Motor neuron (in vitro differentiated cells): ENCODE measurements at regions of chrX and their contacts with region 1.

Region 1: DNA sequence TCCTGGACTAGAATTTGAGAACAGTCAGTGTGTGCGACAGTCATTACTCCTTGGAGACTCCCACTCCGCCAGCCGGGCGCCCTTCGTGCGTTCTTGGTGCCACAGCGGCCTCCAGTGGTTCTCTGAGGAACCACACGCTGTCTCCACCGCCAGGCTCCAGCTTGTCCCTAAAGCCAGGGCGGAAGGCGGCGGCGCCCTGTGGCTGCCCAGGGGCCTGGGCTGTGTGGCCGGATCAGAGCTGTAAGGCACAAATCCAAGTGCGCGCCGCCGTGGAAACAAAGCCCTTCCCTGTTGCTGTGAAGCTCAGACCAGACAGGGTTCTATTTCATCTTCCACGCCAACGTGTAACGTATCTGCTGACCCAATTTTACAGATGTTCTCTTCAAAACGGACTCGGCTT is 34.2 kb downstream of the IDS start:
- ATAC-seq: peak; percentile 91 to 99 (median 98)
- H3K4me3 ChIP-seq: no peak overlapping the region
- H3K27ac ChIP-seq: no peak overlapping the region
- H3K4me1 ChIP-seq: no peaks in the 10 kb centered on the region

Region 2: GRCh38 chrX:148069759-148070503 is 1401.0 kb before region 1 on chrX:
- in situ Hi-C with region 1: loop called in 2 of 9 experiments (anchors 25 kb)
- ATAC-seq: no peak
- H3K4me3 ChIP-seq: no peak overlapping the region
- H3K27ac ChIP-seq: no peak overlapping the region
- H3K4me1 ChIP-seq: no peaks in the 10 kb centered on the region

Region 3: GRCh38 chrX:148080593-148080992 is 1390.4 kb before region 1 on chrX:
- in situ Hi-C with region 1: loop called in 1 of 9 experiments (anchors 25 kb)
- ATAC-seq: no peak
- H3K4me3 ChIP-seq: no peak overlapping the region
- H3K27ac ChIP-seq: no peak overlapping the region
- H3K4me1 ChIP-seq: no peaks in the 10 kb centered on the region

Region 4: DNA sequence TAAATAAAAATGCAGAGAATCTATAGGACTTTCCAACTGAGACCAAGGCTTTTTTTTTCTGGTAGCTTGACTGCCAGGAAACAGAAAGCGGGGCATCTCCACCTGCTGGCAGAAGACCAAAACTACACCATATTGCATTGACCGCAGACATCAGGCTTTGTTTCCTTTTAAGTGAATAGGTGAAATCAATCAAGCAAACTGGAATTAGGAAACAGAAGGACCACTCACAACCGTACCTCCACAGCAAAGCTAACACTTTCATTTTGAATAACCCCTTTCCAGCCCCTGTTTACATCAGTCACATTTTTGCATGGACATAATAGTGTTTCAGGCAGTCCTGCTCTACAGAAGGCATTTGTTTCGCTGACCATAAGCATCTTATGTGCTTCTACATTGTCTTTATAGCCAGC is 184.0 kb before region 1 on chrX:
- in situ Hi-C with region 1: loop called in 1 of 9 experiments (anchors 25 kb)
- ATAC-seq: peak in 4 of 8 experiments; percentile 35 to 52 (median 44)
- H3K4me3 ChIP-seq: no peak overlapping the region
- H3K27ac ChIP-seq: no peak overlapping the region
- H3K4me1 ChIP-seq: peaks cover 0 to 3% of the 10 kb centered on the region in 2 donors

Region 5: GRCh38 chrX:149313871-149314371 is 157.0 kb before region 1 on chrX:
- in situ Hi-C with region 1: loop called in 1 of 9 experiments (anchors 25 kb)
- ATAC-seq: peak in 5 of 8 experiments; percentile 87 to 93 (median 92)
- H3K4me3 ChIP-seq: peak overlapping the region in 1 of 5 donors; percentile 7
- H3K27ac ChIP-seq: peak overlapping the region; percentile 69 to 72
- H3K4me1 ChIP-seq: peaks cover 6 to 24% of the 10 kb centered on the region in 2 donors

Region 6: GRCh38 chrX:149682031-149682430 is 211.1 kb after region 1 on chrX:
- in situ Hi-C with region 1: no loop called
- ATAC-seq: no peak
- H3K4me3 ChIP-seq: no peak overlapping the region
- H3K27ac ChIP-seq: no peak overlapping the region
- H3K4me1 ChIP-seq: peaks cover 20 to 21% of the 10 kb centered on the region in 2 donors

Region 7: GRCh38 chrX:150081076-150081475 is 610.1 kb after region 1 on chrX:
- in situ Hi-C with region 1: no loop called
- ATAC-seq: peak in 2 of 8 experiments; percentile 30 to 43
- H3K4me3 ChIP-seq: no peak overlapping the region
- H3K27ac ChIP-seq: no peak overlapping the region
- H3K4me1 ChIP-seq: no peaks in the 10 kb centered on the region